Activated B cell treated with CpG ODN at 0.5 μM for 24 hours (primary cell): ENCODE measurements at regions of chr14 and their contacts with region 1.

Region 1: DNA sequence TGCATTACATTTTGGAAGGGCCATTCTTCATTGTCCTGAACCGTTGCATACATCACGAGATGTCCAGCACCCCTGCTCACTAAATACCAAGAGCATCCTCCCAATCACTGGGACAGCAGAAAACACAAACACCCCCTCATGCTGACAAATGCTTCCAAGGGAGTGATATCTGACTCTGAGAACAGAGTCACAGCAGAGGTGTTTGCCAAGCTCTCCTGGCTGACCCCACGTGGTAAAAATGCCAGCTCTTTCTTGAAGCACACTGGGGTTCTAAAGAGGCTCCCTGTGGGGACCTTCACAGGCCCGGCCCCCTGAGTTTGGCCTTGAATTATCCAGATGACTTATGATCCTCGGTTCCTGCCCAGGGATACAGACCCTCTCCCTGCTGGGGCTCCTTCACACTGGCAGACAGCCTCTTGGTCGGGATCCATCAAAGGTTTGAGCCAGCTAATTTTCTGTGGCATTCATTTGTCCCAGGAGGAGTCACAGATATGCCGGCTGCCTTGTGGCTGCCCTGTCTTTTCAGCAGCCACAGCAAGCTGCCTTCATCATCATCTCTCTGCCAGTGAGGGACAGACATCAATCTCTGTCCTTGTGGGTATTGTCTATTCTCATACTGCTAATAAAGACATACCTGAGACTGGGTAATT is 43.1 kb upstream of the PSMC1 start:
- DNase-seq: no peak
- ATAC-seq: no peak
- H3K4me3 Mint-ChIP-seq: no peak overlapping the region
- H3K27ac Mint-ChIP-seq: no peak overlapping the region
- H3K4me1 Mint-ChIP-seq: no peaks in the 10 kb centered on the region
- H3K27me3 Mint-ChIP-seq: peaks cover 6% of the 10 kb centered on the region
- CTCF ChIP-seq: no peak

Region 2: DNA sequence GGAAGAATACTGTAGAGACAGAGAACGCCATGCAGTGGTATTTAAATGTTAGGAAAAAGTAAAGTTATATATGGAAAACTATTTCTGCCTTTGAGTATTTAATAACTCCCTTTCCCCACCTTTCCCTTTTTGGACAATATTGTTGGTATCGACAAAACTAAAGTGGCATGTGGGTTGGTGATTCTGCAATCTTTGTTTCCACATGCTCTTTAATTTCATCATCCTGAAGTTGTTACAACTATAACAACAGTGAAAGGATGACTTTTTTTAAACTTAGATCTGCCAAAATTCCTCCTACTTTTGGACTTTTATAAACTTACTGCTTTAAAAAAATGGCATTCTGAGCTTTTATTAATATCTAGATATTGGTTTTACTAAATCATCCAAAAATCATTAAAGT is 1363.5 kb before region 1 on chr14:
- CTCF ChIA-PET with region 1: no interaction called
- POLR2A ChIA-PET with region 1: no interaction called
- intact Hi-C with region 1: loop called (anchors 5 kb)
- DNase-seq: no peak
- ATAC-seq: no peak
- H3K4me3 Mint-ChIP-seq: no peak overlapping the region
- H3K27ac Mint-ChIP-seq: no peak overlapping the region
- H3K4me1 Mint-ChIP-seq: no peaks in the 10 kb centered on the region
- H3K27me3 Mint-ChIP-seq: no peaks in the 10 kb centered on the region
- CTCF ChIP-seq: no peak